ENCODE measurements at regions of chr16 and their contacts with region 1.

Region 1: DNA sequence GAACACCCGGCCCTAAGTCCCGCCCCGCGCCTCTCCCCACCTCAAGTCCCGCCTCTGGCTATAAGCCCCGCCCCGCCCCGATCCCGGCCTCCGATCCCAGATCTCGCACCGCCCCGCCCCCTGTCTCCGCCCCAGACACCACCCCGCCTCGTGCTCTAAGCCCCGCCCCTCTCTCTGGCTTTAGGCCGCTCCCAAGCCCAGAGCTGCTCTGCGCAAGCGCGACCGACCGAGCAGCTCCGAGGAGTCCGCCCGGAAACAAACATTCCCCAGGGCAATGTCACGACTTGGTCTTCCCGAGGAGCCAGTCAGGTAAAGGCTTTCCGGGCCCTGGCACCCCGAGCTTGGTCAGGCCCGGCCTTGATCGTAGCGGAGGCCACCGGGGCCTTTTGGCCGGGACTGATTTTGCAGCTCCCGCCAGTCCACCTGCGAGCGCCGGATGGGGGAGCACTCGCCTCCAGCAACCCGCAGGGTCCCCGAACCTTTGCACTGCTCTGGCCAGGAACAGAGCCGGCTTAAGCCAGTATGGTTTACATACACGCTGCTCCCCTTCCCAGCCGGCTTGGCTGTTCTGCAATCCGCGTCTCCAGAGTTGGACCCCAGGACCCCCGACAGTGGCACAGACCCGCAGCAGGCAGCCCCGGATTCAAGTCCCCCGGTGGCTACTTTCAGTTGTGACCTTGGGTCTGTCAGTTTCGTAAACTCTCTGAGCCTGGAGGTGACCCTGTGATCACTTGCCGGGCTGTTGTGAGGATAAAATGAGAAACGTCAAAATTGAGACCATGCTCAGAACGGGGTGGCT is at the start of gene NUDT7:
- DNase-seq: peak; percentile 99
- ATAC-seq: peak; percentile 100
- total RNA-seq, gene NUDT7: 46.0 TPM

Region 2: DNA sequence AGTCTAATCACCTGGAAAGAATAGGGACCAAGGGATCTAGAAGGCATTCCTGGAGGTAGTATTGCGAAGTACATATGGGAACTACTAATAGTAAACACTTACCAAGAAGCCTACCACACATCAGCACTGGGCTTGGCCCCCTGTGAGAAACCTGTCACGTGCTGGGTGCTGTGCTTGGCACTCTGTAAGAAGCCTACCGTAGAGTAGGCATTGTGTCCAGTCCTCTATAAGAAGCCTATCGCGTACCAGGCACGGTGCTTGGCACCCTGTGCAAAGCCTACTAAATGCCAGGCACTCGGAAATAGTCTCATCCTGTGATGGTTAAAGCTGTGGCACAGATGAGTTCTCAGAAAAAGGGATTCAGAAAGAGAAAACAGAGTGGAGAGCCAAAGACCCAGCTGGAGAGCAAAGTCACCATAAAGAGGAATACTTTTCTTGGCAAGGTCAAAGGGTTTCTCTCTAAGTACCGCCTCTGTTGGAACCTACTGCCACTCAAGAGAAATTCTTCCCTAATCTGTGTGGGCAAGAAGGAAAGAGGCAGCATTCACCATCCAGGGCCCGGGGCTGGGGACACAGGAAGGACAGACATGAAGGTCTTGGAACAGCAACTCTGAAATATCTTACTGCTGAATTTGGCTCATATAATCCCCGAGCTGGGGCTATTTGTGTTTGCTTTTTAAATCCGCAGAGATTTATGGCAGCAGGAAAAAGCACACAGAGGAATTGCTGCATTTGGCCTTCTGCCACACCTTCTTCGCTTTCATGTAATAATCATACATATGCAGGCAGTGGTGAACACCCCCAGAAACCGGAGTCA is 147.7 kb after region 1 on chr16:
- intact Hi-C with region 1: loop called (anchors 5 kb)
- DNase-seq: peak; percentile 76
- ATAC-seq: peak; percentile 71

Region 3: GRCh38 chr16:77960771-77961170 is 238.3 kb after region 1 on chr16:
- intact Hi-C with region 1: no loop called
- DNase-seq: no peak
- ATAC-seq: no peak

Region 4: GRCh38 chr16:77971306-77972271 is 249.1 kb after region 1 on chr16:
- intact Hi-C with region 1: loop called (anchors 2 kb)
- DNase-seq: peak; percentile 90
- ATAC-seq: peak; percentile 86

Measured in Right ventricle myocardium inferior (tissue), 1 donor.